Activated CD8-positive, alpha-beta T cell treated with anti-CD3 and anti-CD28 coated beads for 36 hours (primary cell): ENCODE measurements at regions of chr10 and their contacts with region 1.

Region 1: GRCh38 chr10:14500172-14500765 is 169.5 kb upstream of the FRMD4A start:
- DNase-seq: no peak
- ATAC-seq: no peak
- H3K4me3 Mint-ChIP-seq: no peak overlapping the region
- H3K27ac Mint-ChIP-seq: no peak overlapping the region
- H3K4me1 Mint-ChIP-seq: peaks cover 7% of the 10 kb centered on the region
- H3K27me3 Mint-ChIP-seq: no peaks in the 10 kb centered on the region
- CTCF ChIP-seq: no peak

Region 2: GRCh38 chr10:14329746-14330173 is 170.5 kb before region 1 on chr10:
- CTCF ChIA-PET with region 1: no interaction called
- POLR2A ChIA-PET with region 1: no interaction called
- intact Hi-C with region 1: no loop called
- DNase-seq: no peak
- ATAC-seq: no peak
- H3K4me3 Mint-ChIP-seq: no peak overlapping the region
- H3K27ac Mint-ChIP-seq: no peak overlapping the region
- H3K4me1 Mint-ChIP-seq: no peaks in the 10 kb centered on the region
- H3K27me3 Mint-ChIP-seq: peaks cover 40% of the 10 kb centered on the region
- CTCF ChIP-seq: no peak

Region 3: GRCh38 chr10:14385596-14386593 is 114.4 kb before region 1 on chr10:
- CTCF ChIA-PET with region 1: no interaction called
- POLR2A ChIA-PET with region 1: no interaction called
- intact Hi-C with region 1: no loop called
- DNase-seq: peak; percentile 55
- ATAC-seq: peak; percentile 59
- H3K4me3 Mint-ChIP-seq: no peak overlapping the region
- H3K27ac Mint-ChIP-seq: no peak overlapping the region
- H3K4me1 Mint-ChIP-seq: peaks cover 65% of the 10 kb centered on the region
- H3K27me3 Mint-ChIP-seq: peaks cover 18% of the 10 kb centered on the region
- CTCF ChIP-seq: no peak

Region 4: GRCh38 chr10:14478604-14479003 is 21.7 kb before region 1 on chr10:
- CTCF ChIA-PET with region 1: no interaction called
- POLR2A ChIA-PET with region 1: no interaction called
- intact Hi-C with region 1: no loop called
- DNase-seq: peak; percentile 35
- ATAC-seq: peak; percentile 65
- H3K4me3 Mint-ChIP-seq: no peak overlapping the region
- H3K27ac Mint-ChIP-seq: no peak overlapping the region
- H3K4me1 Mint-ChIP-seq: no peaks in the 10 kb centered on the region
- H3K27me3 Mint-ChIP-seq: peaks cover 6% of the 10 kb centered on the region
- CTCF ChIP-seq: peak; percentile 56

Region 5: DNA sequence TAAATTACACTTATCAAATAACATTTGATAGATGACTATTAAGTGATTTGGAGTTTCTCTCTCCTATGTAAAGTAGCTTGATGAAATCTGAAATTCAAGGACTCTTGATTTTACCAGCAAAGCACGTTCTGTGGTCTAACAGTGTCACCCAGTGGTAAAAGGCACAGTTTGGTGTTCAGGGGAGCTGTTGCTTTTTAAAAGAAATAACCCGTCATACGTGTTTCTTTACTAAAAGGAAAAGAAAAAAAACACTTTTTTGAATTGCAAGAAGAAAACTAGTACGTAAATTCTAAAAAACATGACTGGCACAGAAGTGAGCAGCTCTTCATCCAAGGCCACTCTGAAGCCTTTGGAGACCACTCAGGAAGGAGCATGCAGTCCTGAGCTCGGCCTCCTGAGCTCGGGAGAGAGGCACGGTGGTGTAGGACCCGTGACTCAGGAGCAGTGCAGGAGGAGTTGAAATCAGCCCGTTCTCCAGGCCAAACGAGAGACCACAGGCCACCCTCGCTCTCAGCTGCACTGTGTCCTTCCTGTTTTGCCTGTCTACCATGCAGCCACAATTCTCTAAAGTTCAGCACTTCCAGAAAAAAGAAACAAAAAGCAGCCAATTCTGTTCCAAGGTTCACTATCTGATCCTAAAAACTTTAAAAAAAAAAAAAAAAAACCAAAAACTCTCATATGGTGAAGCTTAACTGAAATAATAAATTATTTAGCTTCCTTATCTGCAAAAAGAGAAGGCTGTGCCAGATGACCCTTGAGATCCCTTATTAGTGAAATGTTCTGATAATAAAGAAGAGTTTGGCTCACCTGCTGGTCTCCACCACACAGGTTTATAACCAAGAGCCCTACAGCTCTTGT is 43.0 kb after region 1 on chr10:
- CTCF ChIA-PET with region 1: interaction called, 12 read pairs
- POLR2A ChIA-PET with region 1: no interaction called
- intact Hi-C with region 1: loop called (anchors 5 kb)
- DNase-seq: peak; percentile 60
- ATAC-seq: peak; percentile 74
- H3K4me3 Mint-ChIP-seq: peak overlapping the region; percentile 58
- H3K27ac Mint-ChIP-seq: peak overlapping the region; percentile 88
- H3K4me1 Mint-ChIP-seq: peaks cover 83% of the 10 kb centered on the region
- H3K27me3 Mint-ChIP-seq: no peaks in the 10 kb centered on the region
- CTCF ChIP-seq: peak; percentile 32

Region 6: GRCh38 chr10:14571866-14572507 is 71.7 kb after region 1 on chr10:
- CTCF ChIA-PET with region 1: no interaction called
- POLR2A ChIA-PET with region 1: no interaction called
- intact Hi-C with region 1: loop called (anchors 2 kb)
- DNase-seq: peak; percentile 81
- ATAC-seq: peak; percentile 84
- H3K4me3 Mint-ChIP-seq: peak overlapping the region; percentile 76
- H3K27ac Mint-ChIP-seq: peak overlapping the region; percentile 92
- H3K4me1 Mint-ChIP-seq: peaks cover 85% of the 10 kb centered on the region
- H3K27me3 Mint-ChIP-seq: no peaks in the 10 kb centered on the region
- CTCF ChIP-seq: no peak

Region 7: GRCh38 chr10:14822879-14823755 is 322.8 kb after region 1 on chr10:
- CTCF ChIA-PET with region 1: interaction called, 10 read pairs
- POLR2A ChIA-PET with region 1: interaction called, 3 read pairs
- intact Hi-C with region 1: loop called (anchors 2 kb)
- DNase-seq: peak; percentile 69
- ATAC-seq: peak; percentile 68
- H3K4me3 Mint-ChIP-seq: no peak overlapping the region
- H3K27ac Mint-ChIP-seq: no peak overlapping the region
- H3K4me1 Mint-ChIP-seq: peaks cover 3% of the 10 kb centered on the region
- H3K27me3 Mint-ChIP-seq: no peaks in the 10 kb centered on the region
- CTCF ChIP-seq: peak; percentile 83